Posterior vena cava (tissue), 2 donors: ENCODE measurements at regions of chr2 and their contacts with region 1.

Region 1: GRCh38 chr2:69306822-69307578 is 80.0 kb downstream of the GFPT1 start:
- DNase-seq: peak; percentile 96

Region 2: DNA sequence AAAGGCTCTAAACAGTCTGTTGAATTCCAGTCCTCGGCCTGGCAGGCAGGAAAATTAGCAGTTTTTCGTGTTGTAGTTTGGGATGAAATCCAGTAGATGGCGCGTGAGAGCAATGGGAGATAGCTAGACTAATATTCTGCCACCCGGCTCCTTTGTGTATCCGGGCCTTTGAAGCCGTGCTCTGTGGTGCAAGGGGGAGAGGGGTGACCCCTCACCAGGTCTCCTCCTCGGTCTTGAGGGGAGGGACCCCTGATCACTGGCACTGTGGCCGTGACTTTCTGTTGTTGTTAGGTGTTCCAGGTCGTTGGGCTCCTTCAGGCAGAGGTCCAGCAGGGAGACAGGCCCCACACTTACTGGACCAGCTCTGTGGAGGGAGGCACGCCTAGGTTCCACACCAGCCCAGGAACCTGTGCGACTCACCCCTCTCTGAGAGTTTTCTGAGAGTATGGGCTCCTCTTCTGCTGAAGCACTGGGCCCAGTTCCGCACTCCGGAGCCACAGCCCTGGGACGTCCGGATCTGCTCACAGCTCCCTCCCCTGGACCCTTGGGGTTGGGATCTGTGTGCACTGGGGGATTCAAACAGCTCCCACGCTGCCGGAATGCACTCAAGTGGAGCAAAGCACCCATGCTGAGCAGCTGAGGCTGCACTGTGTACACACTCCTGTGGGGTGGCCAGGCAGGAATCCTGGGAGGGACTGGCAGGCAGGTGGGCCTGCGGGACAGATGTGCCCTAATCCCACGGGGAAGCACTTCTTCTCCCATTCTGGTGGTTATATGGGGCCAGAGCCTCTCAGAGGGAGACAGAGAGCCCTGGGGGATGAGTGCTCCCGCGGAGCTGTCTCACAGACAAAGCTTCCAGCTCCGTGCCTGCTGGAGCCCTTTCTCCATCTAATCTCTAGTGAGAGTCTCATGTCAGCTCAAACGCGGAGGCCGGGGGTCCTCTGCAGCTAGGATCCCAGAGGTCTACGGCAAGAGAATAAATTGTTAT is 363.1 kb before region 1 on chr2:
- intact Hi-C with region 1: loop called in 1 of 2 experiments (anchors 10 kb)
- DNase-seq: no peak

Region 3: GRCh38 chr2:69012310-69013141 is 294.5 kb before region 1 on chr2:
- intact Hi-C with region 1: loop called (anchors 2 to 5 kb)
- DNase-seq: peak; percentile 90

Region 4: GRCh38 chr2:69026026-69026425 is 281.0 kb before region 1 on chr2:
- intact Hi-C with region 1: loop called in 1 of 2 experiments (anchors 5 kb)
- DNase-seq: no peak

Region 5: GRCh38 chr2:69163109-69163508 is 143.9 kb before region 1 on chr2:
- intact Hi-C with region 1: loop called in 1 of 2 experiments (anchors 10 kb)
- DNase-seq: no peak

Region 6: GRCh38 chr2:69253611-69254288 is 53.2 kb before region 1 on chr2:
- intact Hi-C with region 1: loop called in 1 of 2 experiments (anchors 10 kb)
- DNase-seq: no peak

Region 7: GRCh38 chr2:69345434-69345833 is 38.4 kb after region 1 on chr2:
- intact Hi-C with region 1: no loop called
- DNase-seq: no peak